ENCODE measurements at regions of chr4 and their contacts with region 1.

Region 1: DNA sequence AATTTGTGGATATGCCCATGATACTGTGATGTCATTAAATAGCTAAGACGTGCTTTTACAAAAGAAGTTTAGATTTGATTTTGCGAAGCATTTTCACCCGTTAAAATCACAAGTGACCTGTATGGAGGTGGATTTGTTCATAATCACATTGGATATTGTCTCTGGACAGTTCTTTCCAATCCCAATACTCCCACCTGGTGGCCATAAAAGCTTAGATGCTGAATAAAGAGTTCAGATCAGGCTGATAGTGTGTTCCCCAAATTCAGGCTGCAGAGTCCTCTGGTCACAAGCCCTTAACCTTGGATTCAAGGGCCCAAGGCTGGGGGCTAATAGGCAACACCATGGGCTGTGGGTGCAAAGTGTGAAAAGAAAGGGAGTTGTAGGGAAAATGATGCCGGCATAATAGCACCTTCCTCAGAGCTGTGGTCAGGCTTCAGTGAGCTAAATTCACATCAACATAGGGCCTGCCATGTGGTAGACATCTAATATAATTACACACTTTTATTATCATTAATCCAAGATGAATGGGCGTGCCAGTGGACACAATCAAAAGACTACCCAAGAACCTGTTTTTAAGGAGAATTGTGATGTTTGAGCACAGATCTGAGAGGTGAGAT is 28.1 kb downstream of the SMIM43 start:
- DNase-seq: peak; percentile 79
- H3K4me3 Mint-ChIP-seq: no peak overlapping the region
- H3K27ac Mint-ChIP-seq: no peak overlapping the region
- H3K4me1 Mint-ChIP-seq: no peaks in the 10 kb centered on the region
- H3K27me3 Mint-ChIP-seq: no peaks in the 10 kb centered on the region
- CTCF ChIP-seq: peak; percentile 43

Region 2: GRCh38 chr4:121255986-121256750 is 480.7 kb before region 1 on chr4:
- CTCF ChIA-PET with region 1: no interaction called
- POLR2A ChIA-PET with region 1: no interaction called
- intact Hi-C with region 1: no loop called
- DNase-seq: peak; percentile 94
- H3K4me3 Mint-ChIP-seq: no peak overlapping the region
- H3K27ac Mint-ChIP-seq: peak overlapping the region; percentile 66
- H3K4me1 Mint-ChIP-seq: peaks cover 14% of the 10 kb centered on the region
- H3K27me3 Mint-ChIP-seq: no peaks in the 10 kb centered on the region
- CTCF ChIP-seq: no peak

Region 3: GRCh38 chr4:121421594-121421993 is 315.2 kb before region 1 on chr4:
- CTCF ChIA-PET with region 1: interaction called, 3 read pairs
- POLR2A ChIA-PET with region 1: no interaction called
- intact Hi-C with region 1: loop called (anchors 1 kb)
- DNase-seq: peak; percentile 59
- H3K4me3 Mint-ChIP-seq: no peak overlapping the region
- H3K27ac Mint-ChIP-seq: peak overlapping the region; percentile 8
- H3K4me1 Mint-ChIP-seq: peaks cover 7% of the 10 kb centered on the region
- H3K27me3 Mint-ChIP-seq: no peaks in the 10 kb centered on the region
- CTCF ChIP-seq: peak; percentile 67

Region 4: DNA sequence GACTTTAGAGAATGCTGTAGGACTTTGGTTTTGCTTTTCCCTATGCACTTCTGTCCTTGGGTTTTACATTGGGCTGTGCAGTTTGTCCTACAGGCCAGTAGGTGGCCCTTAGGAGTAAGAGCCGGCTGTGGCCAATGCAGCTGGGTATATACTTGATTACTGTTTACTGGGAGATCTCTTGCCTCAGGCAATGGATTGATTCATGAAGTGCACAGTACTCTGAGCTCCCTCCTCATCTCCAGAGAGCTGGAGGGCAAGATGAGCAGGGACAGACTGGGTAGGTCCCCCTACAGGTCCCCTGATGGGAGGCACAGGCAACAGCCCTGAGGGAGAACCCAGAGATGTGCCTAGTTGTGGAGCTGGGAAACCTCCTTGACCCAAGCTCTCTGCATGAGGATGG is 252.2 kb before region 1 on chr4:
- CTCF ChIA-PET with region 1: interaction called, 4 read pairs
- POLR2A ChIA-PET with region 1: no interaction called
- intact Hi-C with region 1: loop called (anchors 1 kb)
- DNase-seq: peak; percentile 63
- H3K4me3 Mint-ChIP-seq: no peak overlapping the region
- H3K27ac Mint-ChIP-seq: no peak overlapping the region
- H3K4me1 Mint-ChIP-seq: peaks cover 5% of the 10 kb centered on the region
- H3K27me3 Mint-ChIP-seq: no peaks in the 10 kb centered on the region
- CTCF ChIP-seq: peak; percentile 68

Region 5: GRCh38 chr4:121711263-121712000 is 25.4 kb before region 1 on chr4:
- CTCF ChIA-PET with region 1: interaction called, 11 read pairs
- POLR2A ChIA-PET with region 1: interaction called, 3 read pairs
- intact Hi-C with region 1: no loop called
- DNase-seq: peak; percentile 93
- H3K4me3 Mint-ChIP-seq: peak overlapping the region; percentile 69
- H3K27ac Mint-ChIP-seq: peak overlapping the region; percentile 93
- H3K4me1 Mint-ChIP-seq: peaks cover 31% of the 10 kb centered on the region
- H3K27me3 Mint-ChIP-seq: no peaks in the 10 kb centered on the region
- CTCF ChIP-seq: no peak

Region 6: DNA sequence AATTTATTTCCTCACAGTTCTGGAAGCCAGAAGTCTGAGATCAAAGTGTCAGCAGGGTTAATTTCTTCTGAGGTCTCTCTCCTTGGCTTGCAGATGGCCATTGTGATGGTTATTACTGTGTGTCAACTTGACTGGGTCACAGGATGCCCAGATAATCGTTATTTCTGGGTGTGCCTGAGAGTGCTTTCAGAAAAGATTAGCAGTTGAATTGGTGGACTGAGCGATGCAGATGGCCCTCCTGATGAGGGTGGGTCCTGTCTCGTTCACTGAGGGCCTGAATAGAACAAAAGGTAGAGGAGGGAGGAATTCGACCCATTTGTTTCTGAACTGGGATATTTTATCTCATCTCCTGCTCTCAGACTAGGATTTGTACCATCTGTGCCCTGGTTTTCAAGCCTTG is 12.4 kb after region 1 on chr4:
- CTCF ChIA-PET with region 1: interaction called, 13 read pairs
- POLR2A ChIA-PET with region 1: no interaction called
- intact Hi-C with region 1: no loop called
- DNase-seq: no peak
- H3K4me3 Mint-ChIP-seq: no peak overlapping the region
- H3K27ac Mint-ChIP-seq: no peak overlapping the region
- H3K4me1 Mint-ChIP-seq: no peaks in the 10 kb centered on the region
- H3K27me3 Mint-ChIP-seq: no peaks in the 10 kb centered on the region
- CTCF ChIP-seq: no peak

Measured in MCF 10A (cell line).